Heart left ventricle (tissue), 16 donors: ENCODE measurements at regions of chr22 and their contacts with region 1.

Region 1: DNA sequence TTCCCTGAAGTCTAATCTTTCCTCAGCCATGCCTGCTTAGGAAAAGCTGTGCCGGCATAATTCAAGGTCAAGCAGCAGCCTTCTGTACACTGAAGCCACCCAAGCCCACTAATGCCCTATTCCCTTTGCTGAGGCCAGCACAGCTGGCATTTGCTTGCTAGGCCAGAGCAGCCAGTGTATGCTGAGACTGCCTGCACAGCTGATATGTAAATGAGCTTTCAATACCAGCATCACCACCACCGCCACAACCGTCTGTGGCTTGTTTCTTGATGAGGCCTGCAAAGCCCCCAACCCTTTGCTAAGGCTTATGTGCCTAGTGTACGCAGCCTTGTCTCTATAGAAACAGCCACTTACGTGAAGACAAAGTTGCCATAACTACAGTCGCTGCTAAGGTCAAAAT is 56.3 kb upstream of the TNRC6B start:
- DNase-seq: no peak
- ATAC-seq: no peak
- H3K4me3 ChIP-seq: no peak overlapping the region
- H3K27ac ChIP-seq: peak overlapping the region in 1 of 12 donors; percentile 18
- H3K4me1 ChIP-seq: peaks cover 0 to 38% (median 16%) of the 10 kb centered on the region in 12 donors
- H3K27me3 ChIP-seq: no peaks in the 10 kb centered on the region
- CTCF ChIP-seq: no peak
- POLR2A ChIP-seq: no peak

Region 2: DNA sequence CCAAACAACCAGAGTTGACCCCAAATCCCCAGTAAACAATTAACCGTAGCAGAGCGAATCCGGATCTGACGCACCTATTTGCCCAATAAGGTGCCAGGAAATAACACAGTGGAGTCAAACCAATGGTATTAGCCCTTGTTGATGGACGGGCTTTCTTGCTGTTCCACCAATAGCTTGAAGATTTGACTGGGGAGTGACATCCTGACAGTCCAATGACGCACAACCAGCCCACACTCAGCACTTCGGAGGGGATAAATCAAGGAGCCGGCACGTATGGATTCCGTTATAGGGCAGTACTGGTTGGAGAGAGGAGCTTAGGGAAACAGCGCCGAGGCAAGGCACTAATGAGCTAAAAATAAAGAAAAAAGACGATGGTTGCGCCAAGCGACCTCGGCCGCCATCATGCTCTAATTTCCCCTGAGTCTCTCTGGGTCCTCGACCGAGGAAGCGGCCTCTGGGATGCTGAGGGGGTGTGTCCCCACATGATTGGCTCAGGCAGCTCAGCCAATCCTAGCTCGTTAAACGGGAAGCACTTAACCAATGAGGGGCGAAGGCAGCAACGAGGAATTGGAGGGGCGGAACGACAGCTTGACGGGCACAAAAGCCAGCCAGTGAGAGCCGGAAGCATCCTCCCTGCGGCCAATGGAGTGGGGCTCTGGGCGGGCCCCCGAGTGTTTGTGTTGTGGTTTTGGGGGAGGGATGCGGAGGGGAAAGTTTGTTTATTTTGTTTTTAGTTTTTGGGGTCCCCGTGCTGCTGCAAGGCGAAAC is 77.2 kb before region 1 on chr22:
- intact Hi-C with region 1: no loop called
- DNase-seq: peak; percentile 97 to 98 (median 98)
- ATAC-seq: peak; percentile 96 to 98 (median 96)
- H3K4me3 ChIP-seq: peak overlapping the region; percentile 36 to 97 (median 82)
- H3K27ac ChIP-seq: peak overlapping the region; percentile 86 to 98 (median 93)
- H3K4me1 ChIP-seq: peaks cover 3 to 48% (median 26%) of the 10 kb centered on the region in 12 donors
- H3K27me3 ChIP-seq: no peaks in the 10 kb centered on the region
- CTCF ChIP-seq: no peak
- POLR2A ChIP-seq: peak; percentile 48 to 61

Region 3: DNA sequence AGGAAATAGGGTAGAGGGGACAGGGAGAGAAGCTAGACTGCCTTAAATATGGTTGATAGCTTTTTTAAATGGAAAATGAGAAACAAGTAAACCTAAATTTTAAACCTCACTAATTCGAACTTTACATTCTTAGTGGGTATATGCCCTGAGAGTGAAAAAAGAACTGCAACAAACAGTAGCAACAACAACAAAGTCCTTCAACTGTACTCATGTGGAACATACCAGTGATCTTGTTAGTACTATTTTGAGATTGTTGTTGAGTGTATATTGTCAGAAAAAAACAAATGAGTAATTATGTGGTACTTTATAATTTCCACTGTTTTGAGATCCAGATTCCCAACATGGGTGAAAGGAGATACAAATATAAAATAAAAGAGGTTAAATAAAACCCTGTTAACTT is 32.6 kb before region 1 on chr22:
- intact Hi-C with region 1: loop called in 1 of 10 experiments (anchors 5 kb)
- DNase-seq: no peak
- ATAC-seq: no peak
- H3K4me3 ChIP-seq: no peak overlapping the region
- H3K27ac ChIP-seq: no peak overlapping the region
- H3K4me1 ChIP-seq: peaks cover 0 to 20% (median 8%) of the 10 kb centered on the region in 12 donors
- H3K27me3 ChIP-seq: no peaks in the 10 kb centered on the region
- CTCF ChIP-seq: no peak
- POLR2A ChIP-seq: no peak

Region 4: GRCh38 chr22:40258451-40259046 is 137.1 kb after region 1 on chr22:
- intact Hi-C with region 1: loop called in 1 of 10 experiments (anchors 10 kb)
- DNase-seq: no peak
- ATAC-seq: peak; percentile 53 to 75 (median 70)
- H3K4me3 ChIP-seq: no peak overlapping the region
- H3K27ac ChIP-seq: peak overlapping the region in 6 of 12 donors; percentile 3 to 82 (median 64)
- H3K4me1 ChIP-seq: peaks cover 0 to 48% (median 19%) of the 10 kb centered on the region in 12 donors
- H3K27me3 ChIP-seq: no peaks in the 10 kb centered on the region
- CTCF ChIP-seq: no peak
- POLR2A ChIP-seq: no peak